ENCODE measurements at regions of chrX and their contacts with region 1.

Region 1: DNA sequence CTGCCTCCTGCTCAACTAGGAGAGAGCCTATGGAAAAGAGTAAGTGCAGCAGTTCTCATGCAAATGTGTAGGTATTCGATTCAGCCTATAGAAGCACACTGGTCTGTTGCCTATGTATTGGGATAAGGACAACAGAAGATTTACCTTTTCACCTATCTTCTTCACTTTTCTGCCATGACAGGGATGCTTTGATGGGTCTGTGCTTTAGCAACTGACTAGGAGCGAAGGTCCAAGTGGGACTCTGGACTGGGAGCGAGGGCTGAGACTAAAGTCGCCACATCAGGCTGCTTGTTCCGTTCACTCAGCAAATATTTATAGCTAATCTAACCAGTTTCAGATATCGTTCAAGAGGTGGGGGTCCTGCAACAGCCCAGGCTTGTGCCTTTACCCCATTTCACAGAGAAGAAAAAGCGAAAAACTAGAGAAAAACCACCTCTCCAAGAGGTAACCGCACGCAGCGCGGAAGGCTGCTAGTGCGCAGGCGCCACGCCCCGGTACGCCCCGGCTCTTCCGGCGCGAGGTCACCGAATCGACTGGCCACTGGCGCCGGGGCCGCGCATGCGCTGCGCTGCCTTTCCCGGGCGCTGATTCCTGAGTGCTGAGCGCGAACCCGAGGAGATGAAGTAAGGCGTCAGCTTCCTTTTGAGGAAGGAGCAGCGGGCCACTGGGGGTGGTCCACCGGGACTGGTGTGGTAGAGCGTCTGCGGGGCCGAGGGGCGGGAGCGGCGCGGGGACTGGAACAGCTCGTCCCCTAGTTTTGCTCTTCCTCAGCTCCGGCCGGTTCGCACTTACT is at the start of gene RBMX2:
- DNase-seq: peak; percentile 60
- ATAC-seq: peak; percentile 87
- H3K4me3 Mint-ChIP-seq: peak within 1 kb of the TSS; percentile 86
- H3K27ac Mint-ChIP-seq: peak within 1 kb of the TSS; percentile 91
- H3K4me1 Mint-ChIP-seq: peaks cover 19% of the 10 kb centered on the region
- H3K27me3 Mint-ChIP-seq: peaks cover 7% of the 10 kb centered on the region
- CTCF ChIP-seq: no peak
- total RNA-seq, gene RBMX2: 21.1 and 23.6 TPM in 2 replicates

Region 2: DNA sequence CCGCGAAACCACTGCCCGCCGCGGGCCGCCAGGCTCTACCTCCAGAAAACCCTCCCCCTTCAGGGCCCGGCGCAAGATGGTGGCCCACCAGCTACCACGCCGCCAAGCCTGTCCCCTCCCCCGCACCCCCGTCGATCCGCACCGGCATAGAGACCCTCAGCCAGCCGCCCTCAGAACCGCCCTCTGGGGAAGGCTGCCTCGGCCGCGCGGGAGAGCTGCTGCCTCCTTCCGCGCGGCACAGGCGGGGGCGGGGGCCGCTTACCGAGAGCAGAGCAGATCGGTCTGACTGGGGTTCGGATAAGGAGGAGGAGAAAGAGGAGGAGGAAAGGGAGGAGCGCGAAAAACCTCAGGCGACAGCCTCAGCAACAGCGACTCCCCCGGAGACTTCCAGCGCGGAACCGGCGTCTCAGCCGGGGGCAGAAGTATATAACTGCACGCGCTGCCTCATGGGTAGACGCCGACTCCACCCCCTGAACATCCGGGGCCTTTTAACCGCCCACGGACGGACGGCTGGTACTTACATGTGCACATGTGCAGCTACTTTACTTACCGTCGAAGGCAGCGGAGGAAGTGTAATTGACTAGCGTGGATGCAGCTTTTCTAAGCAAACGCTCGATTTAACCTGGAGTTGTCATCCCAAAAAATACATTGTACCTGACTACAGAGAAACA is 133.0 kb before region 1 on chrX and contains the start of gene ZNF280C:
- CTCF ChIA-PET with region 1: no interaction called
- POLR2A ChIA-PET with region 1: interaction called, 3 read pairs
- intact Hi-C with region 1: loop called (anchors 5 kb)
- DNase-seq: peak; percentile 80
- ATAC-seq: peak; percentile 93
- H3K4me3 Mint-ChIP-seq: peak within 1 kb of the TSS; percentile 86
- H3K27ac Mint-ChIP-seq: peak within 1 kb of the TSS; percentile 82
- H3K4me1 Mint-ChIP-seq: peaks cover 17% of the 10 kb centered on the region
- H3K27me3 Mint-ChIP-seq: no peaks in the 10 kb centered on the region
- CTCF ChIP-seq: no peak
- total RNA-seq, gene ZNF280C: 6.9 and 9.1 TPM in 2 replicates